IMR-90 (cell line): ENCODE measurements at regions of chr14 and their contacts with region 1.

Region 1: DNA sequence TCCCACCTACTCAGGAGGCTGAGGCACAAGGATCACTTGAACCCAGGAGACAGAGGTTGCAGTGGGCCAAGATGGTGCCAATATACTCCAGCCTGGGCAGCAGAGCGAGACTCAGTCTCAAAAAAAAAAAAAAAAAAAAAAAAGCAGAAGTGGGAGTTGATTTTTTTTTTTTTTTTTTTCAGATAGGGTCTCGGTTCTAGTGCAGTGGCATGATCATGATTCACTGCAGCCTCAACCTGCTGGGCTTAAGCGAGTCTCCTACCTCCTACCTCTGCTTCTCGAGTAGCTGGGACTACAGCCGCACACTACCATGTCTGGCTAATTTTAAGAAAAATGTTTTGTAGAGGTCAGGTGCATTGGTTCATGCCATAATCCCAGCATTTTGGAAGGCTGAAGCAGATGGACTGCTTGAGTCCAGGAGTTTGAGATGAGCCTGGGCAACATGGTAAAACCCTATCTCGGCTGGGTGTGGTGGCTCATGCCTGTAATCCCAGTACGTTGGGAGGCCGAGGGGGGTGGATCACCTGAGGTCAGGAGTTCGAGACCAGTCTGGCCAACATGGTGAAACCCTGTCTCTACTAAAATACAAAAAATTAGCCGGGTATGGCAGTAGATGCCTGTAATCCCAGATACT is 16.3 kb upstream of the HSP90AA1 start:
- DNase-seq: no peak
- ATAC-seq: no peak
- H3K4me3 ChIP-seq: no peak overlapping the region
- H3K27ac ChIP-seq: no peak overlapping the region
- H3K4me1 ChIP-seq: no peaks in the 10 kb centered on the region
- H3K27me3 ChIP-seq: no peaks in the 10 kb centered on the region; the same call in 1 of the 2 replicates
- CTCF ChIP-seq: no peak
- POLR2A ChIP-seq: no peak
- RAD21 ChIP-seq: no peak

Region 2: GRCh38 chr14:102218688-102219087 is 115.5 kb after region 1 on chr14:
- CTCF ChIA-PET with region 1: no interaction called
- POLR2A ChIA-PET with region 1: interaction called, 14 read pairs
- dilution Hi-C with region 1: no loop called
- in situ Hi-C with region 1: no loop called
- intact Hi-C with region 1: no loop called
- DNase-seq: no peak
- ATAC-seq: no peak
- H3K4me3 ChIP-seq: no peak overlapping the region
- H3K27ac ChIP-seq: no peak overlapping the region
- H3K4me1 ChIP-seq: peaks cover 13% of the 10 kb centered on the region
- H3K27me3 ChIP-seq: no peaks in the 10 kb centered on the region
- CTCF ChIP-seq: no peak
- POLR2A ChIP-seq: no peak
- RAD21 ChIP-seq: no peak